BJ (cell line): ENCODE measurements at regions of chr11 and their contacts with region 1.

Region 1: DNA sequence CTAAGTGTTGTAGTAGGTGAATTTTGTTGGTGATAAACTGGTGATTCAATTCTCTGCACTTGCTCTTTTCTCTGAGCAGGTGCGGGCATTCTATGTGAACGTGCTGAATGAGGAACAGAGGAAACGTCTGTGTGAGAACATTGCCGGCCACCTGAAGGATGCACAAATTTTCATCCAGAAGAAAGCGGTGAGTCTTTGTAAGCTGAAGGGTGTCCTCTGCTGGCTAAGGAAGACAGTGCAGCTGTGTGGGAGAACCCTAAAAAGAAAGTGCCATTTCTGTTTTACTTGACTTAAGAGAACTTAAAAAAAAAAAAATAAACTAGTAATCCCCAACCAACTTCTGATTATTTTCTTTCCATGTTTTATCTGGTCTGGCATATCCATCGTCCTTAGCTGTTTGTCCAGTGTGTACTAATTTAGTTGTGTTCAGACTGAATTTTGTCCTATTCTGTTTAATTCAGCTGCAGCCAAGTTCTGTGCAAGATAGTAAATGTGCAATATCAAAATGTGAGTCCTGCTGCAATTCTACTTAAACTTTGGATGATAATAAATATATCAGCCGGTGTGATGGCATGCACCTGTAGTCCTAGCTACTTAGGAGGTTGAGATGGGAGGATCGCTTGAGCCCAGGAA is 29.6 kb downstream of the CAT start:
- DNase-seq: no peak
- H3K4me3 ChIP-seq: no peak overlapping the region
- H3K27me3 ChIP-seq: no peaks in the 10 kb centered on the region
- CTCF ChIP-seq: peak; percentile 72

Region 2: DNA sequence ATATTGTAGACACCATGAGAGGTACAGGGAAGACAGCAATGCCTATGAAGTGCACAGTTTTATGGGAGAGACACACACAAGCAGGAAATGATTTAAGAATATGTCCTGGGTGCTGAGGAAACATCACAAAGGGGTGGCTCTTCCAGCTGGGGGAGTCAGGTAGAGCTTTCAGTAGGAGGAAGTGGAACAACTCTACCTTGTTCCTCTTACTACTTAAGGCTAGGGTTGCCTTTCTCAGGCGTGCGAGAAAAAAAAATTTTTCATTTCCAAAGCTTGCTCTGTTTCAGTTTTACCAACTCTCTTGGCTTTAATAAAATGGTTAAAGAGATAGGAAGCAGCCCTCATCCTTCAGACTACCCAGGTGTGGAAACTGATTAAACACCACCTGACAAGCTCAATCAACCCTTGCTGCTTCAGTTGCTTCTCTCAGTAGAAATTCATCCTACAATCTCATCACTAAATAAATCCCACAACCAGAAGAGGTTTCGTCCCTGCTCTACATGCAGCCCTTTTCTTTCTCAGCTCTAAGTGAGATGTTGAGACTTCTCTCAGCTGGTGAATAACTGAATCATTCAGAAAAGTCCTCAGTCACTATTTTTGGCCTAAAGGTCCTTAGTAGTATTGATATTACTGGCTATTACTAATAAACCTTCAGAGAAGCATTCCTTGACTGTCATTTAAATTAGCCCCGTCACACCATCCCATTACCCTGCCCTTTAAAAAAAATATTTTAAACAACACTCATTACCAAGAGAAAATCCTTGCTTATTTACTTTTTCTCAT is 116.4 kb before region 1 on chr11:
- CTCF ChIA-PET with region 1: no interaction called
- POLR2A ChIA-PET with region 1: no interaction called
- DNase-seq: no peak
- H3K4me3 ChIP-seq: no peak overlapping the region
- H3K27me3 ChIP-seq: no peaks in the 10 kb centered on the region
- CTCF ChIP-seq: no peak

Region 3: DNA sequence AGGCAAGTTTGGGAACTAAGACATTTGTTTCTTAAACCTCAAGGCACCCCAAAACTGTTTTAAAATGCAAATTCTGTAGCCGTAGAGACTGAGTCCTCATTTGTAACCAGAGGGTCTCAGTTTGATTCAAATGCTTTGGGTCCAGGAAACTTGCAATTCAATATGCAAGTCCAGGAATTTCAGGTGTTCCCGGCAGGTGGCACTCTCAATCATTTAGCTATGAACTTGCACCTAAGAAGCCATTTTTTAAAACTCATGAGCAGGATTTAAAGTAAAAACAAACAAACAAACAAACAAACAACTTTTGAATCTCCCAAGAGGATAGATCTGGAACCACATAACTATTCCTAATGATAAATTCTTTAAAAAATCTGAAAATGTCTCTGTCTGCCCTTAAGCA is 101.8 kb before region 1 on chr11:
- CTCF ChIA-PET with region 1: interaction called, 12 read pairs
- POLR2A ChIA-PET with region 1: no interaction called
- DNase-seq: no peak
- H3K4me3 ChIP-seq: no peak overlapping the region
- H3K27me3 ChIP-seq: peaks cover 3% of the 10 kb centered on the region
- CTCF ChIP-seq: peak; percentile 28; the same call in 1 of the 2 replicates

Region 4: DNA sequence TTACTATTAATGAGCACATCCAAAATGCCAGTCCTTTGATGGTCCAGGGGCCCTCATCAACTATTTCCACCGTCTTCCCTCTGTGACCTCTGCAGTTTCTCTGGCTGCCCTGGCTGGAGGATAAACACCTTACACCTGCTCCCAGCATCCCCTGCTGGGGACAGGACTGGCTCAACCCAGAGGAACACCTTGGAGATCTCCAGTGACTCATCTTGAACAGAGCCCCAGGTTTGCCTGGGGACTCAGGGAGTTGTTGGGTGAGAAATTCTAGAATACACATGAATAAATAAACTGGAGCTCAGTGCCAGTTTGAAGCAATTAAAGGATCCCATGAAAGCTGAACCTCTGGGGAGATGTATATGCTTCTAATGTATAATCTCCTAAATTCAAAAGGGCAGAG is 69.3 kb after region 1 on chr11:
- CTCF ChIA-PET with region 1: no interaction called
- POLR2A ChIA-PET with region 1: no interaction called
- DNase-seq: no peak
- H3K4me3 ChIP-seq: no peak overlapping the region
- H3K27me3 ChIP-seq: peaks cover 16% of the 10 kb centered on the region
- CTCF ChIP-seq: no peak